Mucosa of descending colon (tissue), 3 donors: ENCODE measurements at regions of chr11 and their contacts with region 1.

Region 1: GRCh38 chr11:61733120-61733978 is 19.1 kb upstream of the MYRF start:
- DNase-seq: peak; percentile 87 to 94 (median 90)
- ATAC-seq: peak; percentile 94
- H3K4me3 ChIP-seq: no peak overlapping the region
- H3K4me1 ChIP-seq: no peaks in the 10 kb centered on the region
- CTCF ChIP-seq: peak; percentile 99

Region 2: GRCh38 chr11:61270354-61271076 is 462.8 kb before region 1 on chr11:
- intact Hi-C with region 1: no loop called
- DNase-seq: no peak
- ATAC-seq: no peak
- H3K4me3 ChIP-seq: no peak overlapping the region
- H3K4me1 ChIP-seq: no peaks in the 10 kb centered on the region
- CTCF ChIP-seq: no peak

Region 3: DNA sequence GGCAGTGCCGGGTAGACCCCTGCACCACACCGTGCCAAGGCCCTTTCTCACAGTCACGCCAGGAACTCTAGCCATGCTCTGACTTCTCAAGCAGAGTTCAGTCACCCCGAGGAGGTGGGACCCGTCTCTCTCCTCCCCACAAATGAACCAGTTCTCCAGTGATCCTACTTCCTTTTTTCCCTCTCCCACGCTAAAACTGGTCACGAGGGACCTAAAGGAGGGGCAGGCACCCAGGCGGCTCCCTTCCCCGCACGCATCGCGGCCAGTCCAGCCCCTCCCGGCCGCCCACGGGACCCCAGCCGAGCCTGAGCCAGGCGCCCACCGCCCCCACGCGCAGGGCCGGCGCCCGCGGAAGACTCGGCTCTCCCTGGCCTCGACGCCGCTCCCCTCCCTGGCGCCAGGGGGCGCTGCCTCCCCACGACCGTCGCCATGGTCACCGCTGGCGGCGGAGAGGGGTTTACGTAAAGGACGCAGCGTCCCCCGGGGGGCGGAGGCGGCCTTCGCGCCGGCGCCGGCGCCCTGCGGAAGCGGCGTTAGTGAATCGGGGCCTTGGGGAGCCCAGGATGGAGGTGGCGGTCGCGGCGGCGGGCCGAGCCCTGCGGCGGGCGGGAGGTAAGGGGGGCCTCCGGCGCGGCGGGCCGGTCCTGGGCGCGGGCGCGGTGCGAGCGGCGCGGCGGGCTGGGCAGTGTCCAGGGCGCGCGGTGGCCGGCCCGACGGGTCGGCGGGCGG is 53.3 kb before region 1 on chr11 and contains the start of gene DAGLA:
- intact Hi-C with region 1: loop called (anchors 2 to 5 kb)
- DNase-seq: peak; percentile 72 to 86 (median 79)
- ATAC-seq: peak; percentile 84
- H3K4me3 ChIP-seq: peak within 1 kb of the TSS; percentile 24
- H3K4me1 ChIP-seq: peaks cover 35% of the 10 kb centered on the region
- CTCF ChIP-seq: peak; percentile 96
- total RNA-seq, gene DAGLA: 7.2 to 12.0 (median 11.9) TPM

Region 4: GRCh38 chr11:62217191-62217748 is 483.9 kb after region 1 on chr11:
- intact Hi-C with region 1: no loop called
- DNase-seq: no peak
- ATAC-seq: no peak
- H3K4me3 ChIP-seq: no peak overlapping the region
- H3K4me1 ChIP-seq: no peaks in the 10 kb centered on the region
- CTCF ChIP-seq: no peak